AG04449 (cell line): ENCODE measurements at regions of chr12 and their contacts with region 1.

Region 1: GRCh38 chr12:48890657-48891418 is 25.2 kb upstream of the RND1 start:
- DNase-seq: no peak
- H3K4me3 ChIP-seq: peak overlapping the region; percentile 49
- CTCF ChIP-seq: peak; percentile 99

Region 2: GRCh38 chr12:48838048-48838447 is 52.8 kb before region 1 on chr12:
- CTCF ChIA-PET with region 1: interaction called, 15 read pairs
- POLR2A ChIA-PET with region 1: no interaction called
- DNase-seq: no peak
- H3K4me3 ChIP-seq: no peak overlapping the region
- CTCF ChIP-seq: no peak

Region 3: DNA sequence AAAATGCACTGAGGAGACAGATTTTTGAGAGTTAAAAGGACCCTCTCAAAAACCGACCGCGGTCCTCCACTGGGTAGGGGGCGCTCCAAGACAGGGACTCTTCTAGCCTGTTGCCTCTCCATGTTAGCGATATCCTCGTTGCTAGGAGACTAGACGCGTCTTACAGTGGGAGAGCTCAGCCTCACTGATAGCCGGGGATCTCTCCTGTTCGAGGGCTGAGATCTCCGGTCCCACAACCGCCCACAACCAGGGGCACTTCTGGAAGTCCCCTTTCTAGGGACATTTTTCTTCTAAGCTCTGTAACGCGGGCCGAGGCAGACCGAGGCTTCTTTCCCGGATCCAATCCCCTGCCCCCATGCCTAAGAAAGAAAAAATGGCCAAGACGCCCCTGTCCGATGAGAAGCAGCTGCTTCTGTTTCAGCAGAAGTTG is 13.2 kb after region 1 on chr12:
- CTCF ChIA-PET with region 1: interaction called, 144 read pairs
- POLR2A ChIA-PET with region 1: no interaction called
- DNase-seq: no peak
- H3K4me3 ChIP-seq: peak overlapping the region; percentile 58
- CTCF ChIP-seq: peak; percentile 72

Region 4: DNA sequence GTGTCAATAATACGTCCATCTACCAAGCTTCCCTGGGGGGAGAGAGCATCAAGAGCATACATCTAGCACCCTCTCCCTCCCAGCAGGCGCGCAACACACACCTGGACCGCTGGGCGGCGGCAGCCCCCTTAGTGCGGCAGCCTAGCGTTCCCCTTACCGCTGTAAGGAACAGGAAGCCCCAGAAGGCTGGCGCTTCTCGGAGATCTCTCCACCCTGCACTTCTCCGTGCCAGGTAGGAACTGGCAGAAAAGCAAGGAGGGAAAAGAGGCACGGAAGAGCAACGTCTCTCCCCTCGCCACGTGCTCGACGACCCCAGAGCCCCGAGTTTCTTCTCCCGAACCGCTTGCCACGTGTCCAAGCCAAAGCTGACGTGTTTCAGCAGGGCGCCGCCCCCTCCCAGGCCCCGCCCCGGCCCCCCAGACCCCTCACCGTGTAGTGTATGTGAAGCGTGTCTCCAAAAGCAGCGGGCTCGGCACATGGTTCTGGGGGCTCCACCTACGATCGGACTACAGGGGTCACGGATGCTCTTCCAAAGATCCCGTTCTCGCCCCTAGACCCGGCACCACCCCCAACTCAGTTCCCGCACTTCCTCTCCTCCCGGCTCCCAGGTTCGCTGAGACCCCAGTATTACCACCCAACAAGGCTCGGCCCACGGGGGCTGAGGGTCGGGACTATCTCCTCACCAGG is 33.9 kb after region 1 on chr12:
- CTCF ChIA-PET with region 1: interaction called, 52 read pairs
- POLR2A ChIA-PET with region 1: no interaction called
- DNase-seq: no peak
- H3K4me3 ChIP-seq: peak overlapping the region; percentile 89
- CTCF ChIP-seq: peak; percentile 67

Region 5: GRCh38 chr12:48943221-48943620 is 52.4 kb after region 1 on chr12:
- CTCF ChIA-PET with region 1: interaction called, 21 read pairs
- POLR2A ChIA-PET with region 1: no interaction called
- DNase-seq: no peak
- H3K4me3 ChIP-seq: no peak overlapping the region
- CTCF ChIP-seq: no peak

Region 6: GRCh38 chr12:48977315-48978281 is 86.8 kb after region 1 on chr12:
- CTCF ChIA-PET with region 1: interaction called, 10 read pairs
- POLR2A ChIA-PET with region 1: no interaction called
- DNase-seq: no peak
- H3K4me3 ChIP-seq: no peak overlapping the region
- CTCF ChIP-seq: peak; percentile 92